CD14-positive monocyte (primary cell): ENCODE measurements at regions of chr3 and their contacts with region 1.

Region 1: DNA sequence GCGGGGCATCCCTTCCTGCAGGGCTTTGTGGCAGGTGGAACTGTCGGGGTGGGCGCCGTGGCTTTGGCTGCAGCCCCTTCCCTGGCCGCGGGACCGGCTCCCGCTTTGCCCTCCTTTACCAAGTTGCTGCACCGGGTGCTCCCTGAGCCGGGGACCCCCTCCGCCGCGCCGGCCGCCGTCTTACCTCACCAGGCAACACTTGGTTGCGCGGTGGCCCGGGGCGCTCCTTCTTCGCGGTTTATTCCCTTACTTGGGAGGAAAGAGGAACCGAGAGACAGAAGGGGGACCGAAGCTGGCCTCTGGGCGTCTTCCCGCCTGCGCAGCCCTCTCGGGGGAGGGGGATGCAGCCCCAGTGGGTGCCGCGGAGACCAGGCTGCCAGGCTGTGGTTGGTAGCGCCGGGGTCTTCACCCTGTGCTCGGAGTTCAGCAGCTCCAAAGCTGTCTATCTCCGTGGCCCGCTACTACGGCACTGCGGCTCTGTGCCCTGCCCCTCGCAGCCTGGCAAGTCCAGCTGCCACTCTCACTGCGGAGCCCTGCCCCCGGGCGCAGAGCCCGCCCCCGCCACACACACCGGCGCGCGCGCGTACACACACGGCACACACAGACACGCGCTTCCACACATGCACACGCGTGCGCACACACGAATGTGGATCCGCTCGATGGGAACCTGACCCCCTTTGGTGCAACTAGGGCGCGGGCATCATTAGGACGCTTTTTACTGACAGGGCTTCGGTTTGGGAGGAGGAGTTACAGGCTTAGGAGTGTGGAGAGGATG is at the start of gene DGKG:
- DNase-seq: peak; percentile 67 to 68 (median 67)
- H3K4me3 ChIP-seq: peak within 1 kb of the TSS; percentile 82 to 91 (median 82)
- H3K4me3 Mint-ChIP-seq: peak within 1 kb of the TSS; percentile 91 to 94
- H3K27ac ChIP-seq: peak within 1 kb of the TSS; percentile 63 to 83
- H3K27ac Mint-ChIP-seq: peak within 1 kb of the TSS; percentile 83 to 94 (median 87)
- H3K4me1 ChIP-seq: peaks cover 76 to 78% of the 10 kb centered on the region in 2 donors
- H3K4me1 Mint-ChIP-seq: peaks cover 89% of the 10 kb centered on the region
- H3K27me3 ChIP-seq: no peaks in the 10 kb centered on the region
- H3K27me3 Mint-ChIP-seq: no peaks in the 10 kb centered on the region
- CTCF ChIP-seq: no peak
- polyA plus RNA-seq, gene DGKG: 4.2 to 9.2 (median 4.3) TPM

Region 2: GRCh38 chr3:186330772-186331460 is 31.0 kb before region 1 on chr3:
- intact Hi-C with region 1: loop called (anchors 5 kb)
- DNase-seq: no peak
- H3K4me3 ChIP-seq: no peak overlapping the region
- H3K4me3 Mint-ChIP-seq: no peak overlapping the region
- H3K27ac ChIP-seq: peak overlapping the region in 1 of 2 donors; percentile 65
- H3K27ac Mint-ChIP-seq: peak overlapping the region in 4 of 7 donors; percentile 35 to 74 (median 68)
- H3K4me1 ChIP-seq: peaks cover 49 to 57% of the 10 kb centered on the region in 2 donors
- H3K4me1 Mint-ChIP-seq: peaks cover 56% of the 10 kb centered on the region
- H3K27me3 ChIP-seq: no peaks in the 10 kb centered on the region
- H3K27me3 Mint-ChIP-seq: no peaks in the 10 kb centered on the region
- CTCF ChIP-seq: no peak

Region 3: DNA sequence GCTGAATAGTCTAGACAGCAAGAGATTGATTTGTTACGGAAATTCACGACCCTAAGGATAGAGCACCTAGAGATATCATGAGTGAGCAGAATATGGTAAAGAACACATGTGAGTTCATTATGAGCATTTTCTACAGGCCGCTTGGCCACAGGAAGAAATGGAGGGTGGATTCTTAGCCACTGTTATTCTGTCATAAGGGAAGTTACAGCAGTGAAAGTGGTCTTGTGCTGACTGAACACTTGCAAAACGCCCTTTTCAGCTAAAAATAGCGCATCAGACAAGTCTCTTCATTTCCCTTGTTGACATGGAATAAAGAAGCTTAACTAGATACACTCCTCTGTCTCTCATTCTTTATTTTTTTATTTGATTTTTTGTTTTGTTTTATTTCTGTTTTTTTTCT is 19.8 kb before region 1 on chr3:
- intact Hi-C with region 1: loop called in 1 of 2 experiments (anchors 2 kb)
- DNase-seq: peak; percentile 70 to 81 (median 71)
- H3K4me3 ChIP-seq: peak overlapping the region in 2 of 3 experiments; percentile 27 to 46
- H3K4me3 Mint-ChIP-seq: peak overlapping the region; percentile 49 to 79
- H3K27ac ChIP-seq: peak overlapping the region in 1 of 2 donors; percentile 71
- H3K27ac Mint-ChIP-seq: peak overlapping the region; percentile 84 to 96 (median 92)
- H3K4me1 ChIP-seq: peaks cover 50 to 55% of the 10 kb centered on the region in 2 donors
- H3K4me1 Mint-ChIP-seq: peaks cover 57% of the 10 kb centered on the region
- H3K27me3 ChIP-seq: no peaks in the 10 kb centered on the region
- H3K27me3 Mint-ChIP-seq: no peaks in the 10 kb centered on the region
- CTCF ChIP-seq: no peak